ENCODE measurements at regions of chr2 and their contacts with region 1.

Region 1: GRCh38 chr2:16088035-16088801 is 147.9 kb downstream of the MYCN start:
- DNase-seq: no peak
- H3K4me3 ChIP-seq: no peak overlapping the region
- H3K27ac ChIP-seq: no peak overlapping the region
- H3K4me1 ChIP-seq: no peaks in the 10 kb centered on the region
- H3K27me3 ChIP-seq: no peaks in the 10 kb centered on the region
- CTCF ChIP-seq: no peak

Region 2: DNA sequence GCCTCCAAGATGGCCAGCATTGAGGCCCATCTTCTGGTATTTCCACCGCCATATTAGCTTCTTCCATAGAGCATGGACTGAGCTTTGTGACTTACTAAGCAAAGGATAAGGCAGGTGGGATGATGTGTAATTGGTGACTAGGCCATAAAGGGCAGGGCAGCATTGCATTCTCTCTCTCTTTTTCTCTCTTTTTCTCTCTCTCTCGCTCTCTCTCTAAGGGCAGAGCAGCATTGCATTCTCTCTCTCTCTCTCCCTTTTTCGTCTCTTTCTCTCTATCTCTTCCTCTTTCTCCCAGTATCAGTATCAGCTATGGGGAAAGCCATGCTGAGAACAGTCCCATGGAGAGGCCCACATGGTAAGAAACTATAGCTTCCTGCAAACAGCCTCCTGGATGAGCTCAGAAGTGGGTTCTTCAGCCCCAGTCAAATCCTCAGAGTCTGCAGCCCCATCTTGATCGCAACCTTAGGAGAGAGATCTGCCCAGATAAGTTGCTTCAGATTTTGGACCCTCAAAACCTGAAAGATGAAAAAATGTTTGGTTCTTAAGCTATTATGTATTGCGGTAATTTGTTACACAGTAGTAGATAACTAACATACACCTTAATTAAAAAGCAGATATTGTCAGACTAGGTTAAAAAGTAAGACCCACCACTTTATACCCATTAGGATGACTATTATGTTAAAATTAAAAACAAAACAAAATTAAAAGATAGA is 187.0 kb before region 1 on chr2:
- CTCF ChIA-PET with region 1: no interaction called
- POLR2A ChIA-PET with region 1: interaction called, 27 read pairs
- intact Hi-C with region 1: no loop called
- DNase-seq: no peak
- H3K4me3 ChIP-seq: no peak overlapping the region
- H3K27ac ChIP-seq: no peak overlapping the region
- H3K4me1 ChIP-seq: no peaks in the 10 kb centered on the region
- H3K27me3 ChIP-seq: no peaks in the 10 kb centered on the region
- CTCF ChIP-seq: no peak

Region 3: DNA sequence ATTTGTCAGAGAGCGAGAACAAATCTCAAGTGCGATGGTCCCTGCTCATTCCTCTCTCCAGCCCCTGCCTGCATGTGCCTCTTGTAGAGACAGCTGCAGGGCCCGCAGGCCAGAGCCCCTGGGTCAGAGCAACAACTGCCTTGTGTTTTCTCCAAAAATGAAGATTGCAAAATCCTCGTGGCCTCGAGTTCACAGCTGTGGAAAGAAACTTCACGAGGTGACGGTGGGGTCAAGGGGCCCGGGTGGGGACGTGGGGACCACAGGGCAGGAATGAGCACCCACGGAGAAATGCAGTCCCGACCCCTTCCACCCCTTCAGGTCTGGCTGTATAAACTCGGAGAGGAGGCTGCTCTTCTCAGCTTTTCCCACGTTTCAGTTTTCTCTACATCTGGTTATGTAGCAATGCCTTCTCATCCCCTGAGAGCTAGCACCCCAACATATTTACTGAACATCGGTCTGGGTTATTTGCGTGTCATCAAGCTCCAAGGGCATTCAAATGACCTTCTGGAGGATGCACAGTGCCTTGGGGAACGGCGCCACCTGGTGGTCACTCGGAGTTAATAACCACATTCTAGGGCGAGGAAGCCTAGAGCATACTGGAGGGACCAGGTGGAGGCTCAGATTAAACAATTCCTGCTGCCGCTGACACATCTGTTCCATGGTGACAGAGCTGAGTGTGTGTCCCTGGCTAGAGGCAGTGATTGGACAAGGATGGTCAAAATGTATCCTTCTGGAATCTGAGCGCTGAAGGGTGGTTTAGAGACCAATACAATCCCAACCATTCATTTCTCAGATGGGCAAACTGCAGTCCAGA is 668.8 kb after region 1 on chr2:
- CTCF ChIA-PET with region 1: no interaction called
- POLR2A ChIA-PET with region 1: no interaction called
- intact Hi-C with region 1: no loop called
- DNase-seq: peak; percentile 85
- H3K4me3 ChIP-seq: no peak overlapping the region
- H3K27ac ChIP-seq: peak overlapping the region; percentile 60
- H3K4me1 ChIP-seq: peaks cover 8% of the 10 kb centered on the region
- H3K27me3 ChIP-seq: no peaks in the 10 kb centered on the region
- CTCF ChIP-seq: peak; percentile 93

Region 4: DNA sequence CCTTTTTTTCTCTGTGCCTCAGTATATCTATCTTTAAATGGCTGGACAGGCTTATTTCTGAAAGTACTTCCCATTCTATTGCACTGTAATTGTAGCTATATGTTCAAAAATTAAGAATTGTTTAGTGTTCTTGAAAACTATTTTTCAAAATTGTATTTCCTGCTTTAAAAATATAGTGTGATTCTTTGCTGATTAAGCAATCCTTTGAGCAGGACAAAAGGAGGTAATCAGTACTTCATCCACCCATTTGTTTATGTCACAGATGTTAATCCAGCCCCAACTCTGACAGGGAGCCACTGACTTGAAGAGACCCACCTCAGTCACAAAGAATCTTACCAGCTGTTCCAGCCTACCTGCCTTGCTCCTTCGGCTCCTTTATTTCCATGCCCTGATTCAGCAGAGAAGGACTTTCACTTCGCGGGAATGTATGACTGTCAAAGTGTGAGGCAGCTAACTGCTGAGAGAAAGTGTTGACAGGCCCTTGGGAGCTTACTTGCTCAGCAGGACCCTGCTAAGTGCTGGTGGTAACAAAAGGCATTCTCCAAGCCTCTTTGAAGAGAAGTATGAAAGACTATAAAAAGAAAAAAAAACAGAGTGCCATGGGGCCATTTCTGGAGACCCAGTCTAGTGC is 970.7 kb after region 1 on chr2:
- CTCF ChIA-PET with region 1: interaction called, 13 read pairs
- POLR2A ChIA-PET with region 1: no interaction called
- intact Hi-C with region 1: no loop called
- DNase-seq: peak; percentile 15
- H3K4me3 ChIP-seq: no peak overlapping the region
- H3K27ac ChIP-seq: no peak overlapping the region
- H3K4me1 ChIP-seq: no peaks in the 10 kb centered on the region
- H3K27me3 ChIP-seq: no peaks in the 10 kb centered on the region
- CTCF ChIP-seq: no peak

Measured in A673 (cell line).